Psoas muscle (tissue), 8 donors: ENCODE measurements at regions of chr6 and their contacts with region 1.

Region 1: GRCh38 chr6:16128759-16129622 is at the start of gene MYLIP:
- DNase-seq: peak; percentile 98 to 99
- ATAC-seq: peak; percentile 91 to 96 (median 93)
- H3K4me3 ChIP-seq: peak within 1 kb of the TSS; percentile 89
- H3K27ac ChIP-seq: peak within 1 kb of the TSS; percentile 97
- H3K4me1 ChIP-seq: peaks cover 50% of the 10 kb centered on the region
- H3K27me3 ChIP-seq: no peaks in the 10 kb centered on the region
- CTCF ChIP-seq: peak; percentile 84
- total RNA-seq, gene MYLIP: 7.9 to 23.4 (median 14.7) TPM

Region 2: GRCh38 chr6:15793288-15793687 is 335.7 kb before region 1 on chr6:
- intact Hi-C with region 1: loop called in 1 of 2 experiments (anchors 10 kb)
- DNase-seq: peak in 1 of 2 donors; percentile 63
- ATAC-seq: peak; percentile 89 to 92 (median 91)
- H3K4me3 ChIP-seq: no peak overlapping the region
- H3K27ac ChIP-seq: peak overlapping the region; percentile 82
- H3K4me1 ChIP-seq: peaks cover 57% of the 10 kb centered on the region
- H3K27me3 ChIP-seq: no peaks in the 10 kb centered on the region
- CTCF ChIP-seq: no peak

Region 3: GRCh38 chr6:15977050-15977449 is 151.9 kb before region 1 on chr6:
- intact Hi-C with region 1: loop called in 1 of 2 experiments (anchors 5 kb)
- DNase-seq: no peak
- ATAC-seq: no peak
- H3K4me3 ChIP-seq: no peak overlapping the region
- H3K27ac ChIP-seq: no peak overlapping the region
- H3K4me1 ChIP-seq: peaks cover 8% of the 10 kb centered on the region
- H3K27me3 ChIP-seq: no peaks in the 10 kb centered on the region
- CTCF ChIP-seq: no peak

Region 4: DNA sequence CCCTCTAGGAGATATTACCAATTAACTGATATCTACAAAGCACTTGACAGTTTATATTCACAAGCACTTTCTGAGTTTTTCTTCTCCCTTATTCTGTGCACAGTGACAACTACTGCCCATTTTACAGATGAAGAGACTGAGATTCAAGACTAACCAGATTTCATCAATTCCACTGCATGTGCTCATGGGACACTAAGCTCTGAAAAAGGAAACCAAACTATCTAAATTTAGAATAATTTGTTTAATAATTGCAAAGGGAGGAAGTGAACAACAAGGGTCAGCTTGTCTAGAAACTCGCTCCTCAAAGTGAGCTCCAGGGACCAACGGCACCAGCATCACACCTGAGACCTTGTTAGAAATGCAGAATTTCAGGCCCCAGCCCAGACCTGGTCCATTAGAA is 50.9 kb before region 1 on chr6:
- intact Hi-C with region 1: no loop called
- DNase-seq: no peak
- ATAC-seq: no peak
- H3K4me3 ChIP-seq: no peak overlapping the region
- H3K27ac ChIP-seq: no peak overlapping the region
- H3K4me1 ChIP-seq: no peaks in the 10 kb centered on the region
- H3K27me3 ChIP-seq: no peaks in the 10 kb centered on the region
- CTCF ChIP-seq: no peak

Region 5: GRCh38 chr6:16200321-16200883 is 71.4 kb after region 1 on chr6:
- intact Hi-C with region 1: no loop called
- DNase-seq: no peak
- ATAC-seq: peak; percentile 15 to 76 (median 54)
- H3K4me3 ChIP-seq: peak overlapping the region; percentile 57
- H3K27ac ChIP-seq: no peak overlapping the region
- H3K4me1 ChIP-seq: peaks cover 7% of the 10 kb centered on the region
- H3K27me3 ChIP-seq: no peaks in the 10 kb centered on the region
- CTCF ChIP-seq: no peak